ENCODE measurements at regions of chr16 and their contacts with region 1.

Region 1: GRCh38 chr16:66516808-66517585 is 32.9 kb downstream of the TK2 start:
- H3K4me3 Mint-ChIP-seq: peak overlapping the region; percentile 80
- H3K27ac Mint-ChIP-seq: peak overlapping the region; percentile 100
- H3K4me1 Mint-ChIP-seq: peaks cover 100% of the 10 kb centered on the region
- H3K27me3 Mint-ChIP-seq: no peaks in the 10 kb centered on the region

Region 2: GRCh38 chr16:65657071-65657494 is 859.9 kb before region 1 on chr16:
- intact Hi-C with region 1: no loop called
- H3K4me3 Mint-ChIP-seq: no peak overlapping the region
- H3K27ac Mint-ChIP-seq: no peak overlapping the region
- H3K4me1 Mint-ChIP-seq: peaks cover 8% of the 10 kb centered on the region
- H3K27me3 Mint-ChIP-seq: peaks cover 26% of the 10 kb centered on the region

Region 3: GRCh38 chr16:66483689-66484481 is 33.1 kb before region 1 on chr16:
- intact Hi-C with region 1: loop called (anchors 5 kb)
- H3K4me3 Mint-ChIP-seq: no peak overlapping the region
- H3K27ac Mint-ChIP-seq: no peak overlapping the region
- H3K4me1 Mint-ChIP-seq: peaks cover 81% of the 10 kb centered on the region
- H3K27me3 Mint-ChIP-seq: no peaks in the 10 kb centered on the region

Region 4: DNA sequence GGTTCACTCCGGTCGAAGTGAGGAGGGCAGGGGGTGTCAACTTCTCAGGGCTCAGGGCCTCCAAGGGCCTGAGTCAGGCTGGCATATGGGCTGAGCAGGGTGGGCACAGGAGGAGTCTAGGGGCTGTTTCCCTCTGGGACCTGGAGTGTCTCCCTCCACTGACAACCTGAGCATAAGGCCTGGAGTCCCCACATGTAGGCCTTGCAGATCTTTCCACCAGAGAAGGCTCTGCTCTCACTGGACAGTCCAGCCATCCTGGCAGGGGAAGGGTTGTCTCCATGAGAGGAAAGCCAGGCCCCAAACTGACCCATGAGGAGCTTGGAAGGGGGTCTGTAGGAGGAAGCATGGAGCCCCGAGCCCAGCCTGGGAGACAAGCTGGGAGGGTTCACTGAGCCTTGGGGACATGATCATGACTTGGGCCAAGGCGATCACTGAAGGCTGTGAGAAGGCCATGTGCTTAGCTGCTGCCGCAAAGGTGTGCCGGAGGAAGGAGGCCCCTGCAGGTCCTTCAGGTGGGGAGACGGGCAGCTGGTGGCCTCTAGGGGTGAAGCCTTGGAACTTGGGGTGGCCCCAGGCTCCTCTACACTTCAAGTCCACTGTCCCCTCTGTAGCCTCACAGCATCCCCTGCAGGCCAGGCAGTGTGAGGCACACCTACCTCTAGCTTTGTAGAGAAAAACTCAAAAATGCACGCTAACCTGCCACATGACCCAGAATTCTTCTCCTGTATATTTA is 72.2 kb after region 1 on chr16:
- intact Hi-C with region 1: loop called (anchors 5 kb)
- H3K4me3 Mint-ChIP-seq: no peak overlapping the region
- H3K27ac Mint-ChIP-seq: no peak overlapping the region
- H3K4me1 Mint-ChIP-seq: peaks cover 57% of the 10 kb centered on the region
- H3K27me3 Mint-ChIP-seq: peaks cover 7% of the 10 kb centered on the region